ENCODE measurements at regions of chr2 and their contacts with region 1.

Region 1: DNA sequence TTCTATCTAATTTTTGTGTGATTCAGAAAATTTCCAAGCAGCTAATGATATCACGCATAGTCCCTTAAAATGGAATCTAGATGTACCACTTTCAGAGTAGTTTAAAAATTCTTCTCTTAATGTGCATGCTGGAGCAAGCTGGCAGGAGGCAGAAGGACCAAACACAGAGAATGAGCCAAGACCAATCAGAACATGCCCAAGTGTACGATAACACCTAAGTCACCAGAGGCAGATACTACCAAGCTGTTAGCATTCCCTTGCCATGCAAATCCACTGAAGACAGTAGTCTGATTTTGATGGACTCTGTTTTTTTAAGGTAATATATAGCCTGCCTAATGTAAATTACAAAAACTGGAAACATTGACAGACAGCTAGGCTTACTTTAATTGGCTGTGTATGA is 109.3 kb downstream of the DNAH7 start:
- ATAC-seq: no peak
- H3K4me3 ChIP-seq: no peak overlapping the region
- H3K27ac ChIP-seq: no peak overlapping the region
- H3K4me1 ChIP-seq: no peaks in the 10 kb centered on the region

Region 2: GRCh38 chr2:195445639-195446038 is 513.7 kb before region 1 on chr2:
- in situ Hi-C with region 1: no loop called
- ATAC-seq: no peak
- H3K4me3 ChIP-seq: no peak overlapping the region
- H3K27ac ChIP-seq: no peak overlapping the region
- H3K4me1 ChIP-seq: peaks cover 0 to under 1% of the 10 kb centered on the region in 2 donors

Region 3: GRCh38 chr2:196068271-196069209 is 109.2 kb after region 1 on chr2 and contains the start of gene DNAH7:
- in situ Hi-C with region 1: loop called in 1 of 9 experiments (anchors 10 kb)
- ATAC-seq: peak; percentile 89 to 97 (median 94)
- H3K4me3 ChIP-seq: peak within 1 kb of the TSS; percentile 51 to 93 (median 63)
- H3K27ac ChIP-seq: peak within 1 kb of the TSS in 1 of 2 donors; percentile 32
- H3K4me1 ChIP-seq: no peaks in the 10 kb centered on the region
- total RNA-seq, gene DNAH7: 0.36 to 15.3 (median 1.5) TPM

Region 4: DNA sequence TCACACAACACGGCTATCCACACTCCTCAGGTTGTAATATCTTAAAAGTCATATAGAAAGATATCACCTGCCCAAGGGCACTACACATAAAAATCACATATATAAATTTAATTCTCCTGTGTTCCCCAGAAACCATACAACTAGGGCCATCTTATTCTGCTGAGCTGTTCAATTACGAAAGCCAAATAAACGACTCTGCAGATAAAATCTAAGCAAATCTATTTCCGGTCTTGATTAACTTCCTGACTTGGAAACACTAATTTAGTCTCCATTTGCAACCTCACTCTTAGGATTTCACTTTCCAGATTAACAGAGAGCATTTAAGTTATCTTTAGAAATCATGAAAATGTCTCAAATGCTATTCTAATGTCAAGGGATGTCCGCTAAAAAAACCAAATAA is 236.0 kb after region 1 on chr2:
- in situ Hi-C with region 1: no loop called
- ATAC-seq: no peak
- H3K4me3 ChIP-seq: no peak overlapping the region
- H3K27ac ChIP-seq: no peak overlapping the region
- H3K4me1 ChIP-seq: no peaks in the 10 kb centered on the region

Measured in motor neuron (in vitro differentiated cells).